Dorsolateral prefrontal cortex (tissue), 120 donors: ENCODE measurements at regions of chr5 and their contacts with region 1.

Region 1: GRCh38 chr5:174951146-174951780 is 226.9 kb downstream of the MSX2 start:
- DNase-seq: peak in 8 of 10 donors; percentile 43 to 78 (median 62)
- H3K4me3 ChIP-seq: no peak overlapping the region
- H3K27ac ChIP-seq: no peak overlapping the region
- H3K27me3 ChIP-seq: peaks cover 0 to 3% (median 0%) of the 10 kb centered on the region in 45 donors
- CTCF ChIP-seq: peak; percentile 67 to 97 (median 92)

Region 2: GRCh38 chr5:174982485-174982884 is 31.2 kb after region 1 on chr5:
- intact Hi-C with region 1: no loop called
- DNase-seq: no peak
- H3K4me3 ChIP-seq: no peak overlapping the region
- H3K27ac ChIP-seq: no peak overlapping the region
- H3K27me3 ChIP-seq: no peaks in the 10 kb centered on the region
- CTCF ChIP-seq: no peak

Region 3: DNA sequence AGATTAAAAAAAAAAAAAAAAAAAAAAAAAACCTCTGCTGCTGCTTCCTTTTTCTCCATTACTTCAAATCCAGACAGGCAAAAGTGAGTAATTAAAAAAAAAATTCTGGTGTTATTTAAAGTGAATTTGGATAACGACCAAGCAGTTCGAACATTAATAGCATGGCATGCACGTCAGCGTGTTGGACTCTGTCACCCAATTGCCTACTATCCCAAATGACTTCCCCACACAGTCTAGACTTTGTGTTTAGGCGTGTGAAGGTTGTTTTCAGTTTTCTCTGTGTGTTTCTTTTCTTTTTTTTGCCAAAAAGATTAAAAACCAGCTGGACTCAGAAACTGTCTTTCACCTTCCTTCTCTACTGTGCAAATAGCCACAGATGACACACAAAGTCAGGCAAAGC is 94.6 kb after region 1 on chr5:
- intact Hi-C with region 1: no loop called
- DNase-seq: no peak
- H3K4me3 ChIP-seq: no peak overlapping the region
- H3K27ac ChIP-seq: no peak overlapping the region
- H3K27me3 ChIP-seq: no peaks in the 10 kb centered on the region
- CTCF ChIP-seq: no peak

Region 4: DNA sequence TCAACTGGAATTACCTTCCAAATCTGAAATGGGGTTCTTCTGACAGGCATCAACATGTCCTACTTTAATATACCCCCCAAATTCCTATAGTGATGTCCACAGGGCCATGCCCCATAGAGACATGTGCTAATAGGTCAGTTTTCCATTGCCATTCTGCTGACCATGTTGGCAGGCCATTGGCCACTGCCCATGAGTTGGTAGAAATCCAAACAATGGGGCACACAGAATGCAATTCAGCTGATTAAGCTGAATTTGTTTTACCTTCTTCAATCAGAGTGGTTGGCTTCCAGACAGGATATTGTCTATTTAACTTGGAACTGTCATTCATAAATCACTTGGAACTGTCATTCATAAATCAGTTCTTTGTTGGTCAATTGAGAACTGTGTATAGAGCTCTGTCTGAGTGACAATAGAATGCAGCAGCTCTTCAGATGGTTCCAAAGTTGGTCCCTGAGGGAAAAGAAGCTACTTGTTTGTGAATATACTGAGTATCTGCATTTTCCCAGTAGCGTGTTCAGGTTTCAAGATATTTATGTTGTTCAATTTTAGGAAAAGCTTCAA is 155.8 kb after region 1 on chr5:
- intact Hi-C with region 1: no loop called
- DNase-seq: no peak
- H3K4me3 ChIP-seq: no peak overlapping the region
- H3K27ac ChIP-seq: no peak overlapping the region
- H3K27me3 ChIP-seq: peaks cover 0 to 5% (median 0%) of the 10 kb centered on the region in 45 donors
- CTCF ChIP-seq: no peak

Region 5: DNA sequence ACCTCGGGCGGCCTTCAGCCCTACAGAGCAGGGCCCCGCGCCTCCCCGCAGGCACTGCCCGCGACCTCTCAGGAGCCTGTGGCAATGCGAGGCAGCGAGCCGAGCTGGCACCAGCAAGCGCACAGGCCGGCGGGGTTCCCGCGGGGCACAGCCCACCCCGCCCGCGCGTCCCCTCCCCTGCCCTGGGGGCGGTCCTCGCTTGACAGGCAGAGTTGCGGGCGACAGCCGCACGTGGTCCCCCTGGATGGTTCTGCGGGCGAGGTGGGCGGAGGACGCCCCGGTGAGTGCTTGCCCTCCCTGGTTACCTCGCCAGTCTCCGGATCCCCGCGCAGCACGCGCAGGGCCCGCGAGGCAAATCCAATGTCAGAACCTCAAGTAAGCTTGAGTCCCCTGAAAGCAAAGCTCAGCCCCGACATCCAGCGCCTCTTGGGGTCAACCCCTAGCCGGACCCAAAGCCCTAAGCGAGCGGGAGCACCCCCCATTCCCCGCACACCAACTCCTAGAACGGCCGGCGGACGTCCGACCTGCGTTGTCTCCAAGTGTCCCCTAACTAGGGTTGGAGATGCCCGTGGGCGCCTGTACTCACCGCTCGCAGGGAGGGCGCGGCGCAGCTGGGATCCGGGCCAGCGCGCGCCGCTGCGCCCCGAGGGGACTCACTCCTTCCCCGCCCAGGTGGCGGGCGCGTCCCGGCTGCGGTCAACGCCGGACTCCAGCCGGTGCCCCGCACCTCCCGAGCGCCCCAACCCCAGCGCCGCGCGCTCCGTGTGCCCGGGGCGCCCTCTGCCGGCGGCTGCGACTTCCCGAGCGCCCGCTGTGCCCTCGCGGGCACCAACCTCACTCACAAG is 493.0 kb after region 1 on chr5 and contains the start of gene DRD1:
- intact Hi-C with region 1: loop called (anchors 1 to 2 kb)
- DNase-seq: peak in 7 of 10 donors; percentile 21 to 82 (median 47)
- H3K4me3 ChIP-seq: peak within 1 kb of the TSS; percentile 29 to 74 (median 58)
- H3K27ac ChIP-seq: peak within 1 kb of the TSS in 57 of 59 donors; percentile 12 to 89 (median 73)
- H3K27me3 ChIP-seq: peaks cover 0 to 40% (median 5%) of the 10 kb centered on the region in 45 donors
- CTCF ChIP-seq: peak; percentile 36 to 96 (median 82)
- total RNA-seq, gene DRD1: 3.7 to 17.9 (median 10.7) TPM

Region 6: DNA sequence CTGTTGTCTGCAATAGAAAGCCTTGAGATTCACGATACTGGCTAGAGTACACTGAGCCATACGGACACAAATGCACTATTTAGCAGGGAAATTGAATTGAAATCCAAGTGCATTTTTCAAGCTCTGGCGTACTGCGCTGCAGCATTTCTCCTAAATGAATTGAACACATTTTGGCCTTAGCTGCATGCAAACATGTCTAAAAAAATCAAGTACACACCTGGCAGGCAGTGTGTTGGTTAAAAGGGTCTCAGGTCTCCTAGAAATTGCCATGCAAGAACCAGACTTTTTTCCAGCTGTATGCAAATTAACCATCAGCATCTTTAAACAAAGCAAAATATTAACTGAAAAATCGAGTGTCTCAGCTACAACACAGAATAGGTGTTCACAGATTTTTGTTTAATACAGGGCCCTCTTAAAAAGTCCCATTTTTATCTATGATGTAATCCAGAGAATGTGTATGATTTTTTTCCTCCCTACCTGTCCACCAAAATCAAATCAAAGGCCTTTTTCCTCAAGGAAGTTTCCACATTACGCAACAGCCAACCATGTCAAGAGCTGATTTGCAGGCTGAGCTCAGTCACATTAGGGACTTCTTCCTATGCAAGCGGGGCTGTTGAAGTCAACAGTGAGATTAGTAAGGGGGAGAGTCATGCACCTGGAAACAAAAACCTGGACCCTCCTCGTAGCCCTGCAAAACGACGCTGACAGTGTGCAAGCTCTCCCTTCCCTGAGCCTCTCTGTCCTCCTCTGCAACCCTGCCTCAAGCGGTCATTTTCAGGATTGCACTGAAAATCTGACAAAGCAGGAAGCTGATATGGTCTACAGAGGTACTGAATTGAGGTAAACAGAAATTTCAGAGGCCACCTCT is 513.0 kb after region 1 on chr5:
- intact Hi-C with region 1: loop called in 1 of 2 experiments (anchors 5 kb)
- DNase-seq: peak in 3 of 10 donors; percentile 45 to 64 (median 54)
- H3K4me3 ChIP-seq: peak overlapping the region in 5 of 59 donors; percentile 6 to 31 (median 26)
- H3K27ac ChIP-seq: no peak overlapping the region
- H3K27me3 ChIP-seq: no peaks in the 10 kb centered on the region
- CTCF ChIP-seq: peak in 55 of 56 donors; percentile 48 to 79 (median 69)